MCF 10A (cell line): ENCODE measurements at regions of chr5 and their contacts with region 1.

Region 1: DNA sequence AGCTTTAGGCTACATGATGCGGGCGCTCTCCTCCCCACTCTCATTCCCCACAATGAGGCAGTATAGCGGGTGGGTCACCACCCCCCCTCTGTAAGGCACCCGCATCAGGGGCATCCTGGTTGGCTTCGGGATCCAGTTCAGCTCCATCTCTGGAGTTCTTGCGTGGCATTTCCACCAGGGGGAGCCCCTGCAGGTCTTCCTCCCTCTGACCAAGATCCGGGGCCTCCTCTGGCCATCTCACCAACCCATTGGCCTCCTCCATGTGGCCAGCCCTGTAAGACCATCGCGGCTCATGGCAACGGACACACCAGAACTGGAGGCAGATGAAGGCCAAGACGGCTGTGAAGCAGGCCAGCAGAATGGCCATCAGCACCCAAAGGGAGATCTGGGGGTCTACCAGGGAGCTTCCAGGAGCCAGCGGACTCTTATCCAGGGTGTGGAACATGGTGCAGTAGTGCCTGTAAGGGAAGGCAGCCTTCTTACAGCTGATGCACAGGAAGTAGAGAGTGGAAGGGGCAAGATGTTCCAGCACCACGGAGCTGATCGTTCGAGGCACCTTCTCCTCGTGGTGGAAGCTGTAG is 77.0 kb downstream of the CYFIP2 start:
- DNase-seq: peak; percentile 66
- H3K4me3 Mint-ChIP-seq: no peak overlapping the region
- H3K27ac Mint-ChIP-seq: no peak overlapping the region
- H3K4me1 Mint-ChIP-seq: no peaks in the 10 kb centered on the region
- H3K27me3 Mint-ChIP-seq: no peaks in the 10 kb centered on the region
- CTCF ChIP-seq: peak; percentile 82

Region 2: DNA sequence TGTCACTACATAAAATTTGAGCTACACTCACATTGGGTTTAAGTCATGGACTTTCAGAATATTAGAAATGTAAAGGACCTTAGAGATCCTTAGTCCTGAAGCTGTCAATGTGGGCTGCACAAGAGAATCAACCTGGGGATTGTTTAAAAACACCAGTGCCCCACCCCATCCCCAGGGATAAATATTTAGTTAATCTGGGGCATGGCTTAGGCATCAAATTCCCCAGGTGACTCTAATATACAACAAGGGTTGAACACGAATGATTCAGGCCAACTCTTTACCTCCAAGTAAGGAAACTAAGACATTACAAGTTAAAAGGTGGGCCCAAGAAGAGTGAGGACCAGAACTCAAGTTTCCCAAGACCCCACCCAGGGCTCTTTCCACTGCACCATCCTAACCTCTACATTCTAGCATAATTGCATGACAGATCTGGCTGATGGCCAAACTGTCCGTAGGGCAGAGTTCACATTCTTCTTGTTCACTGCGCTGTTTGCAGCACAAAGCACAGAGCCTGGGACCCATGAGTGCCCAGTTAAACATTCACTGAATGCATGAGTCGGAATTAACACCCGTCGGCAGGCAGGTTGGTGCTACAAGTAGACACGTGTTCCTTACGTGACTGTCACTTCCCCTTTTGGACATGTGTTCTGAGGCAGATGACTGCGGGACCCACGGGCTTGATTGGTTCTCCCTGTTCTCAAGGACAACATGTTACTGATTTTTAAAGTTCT is 51.8 kb before region 1 on chr5:
- CTCF ChIA-PET with region 1: no interaction called
- POLR2A ChIA-PET with region 1: no interaction called
- intact Hi-C with region 1: no loop called
- DNase-seq: peak; percentile 39
- H3K4me3 Mint-ChIP-seq: no peak overlapping the region
- H3K27ac Mint-ChIP-seq: no peak overlapping the region
- H3K4me1 Mint-ChIP-seq: peaks cover 15% of the 10 kb centered on the region
- H3K27me3 Mint-ChIP-seq: no peaks in the 10 kb centered on the region
- CTCF ChIP-seq: no peak

Region 3: DNA sequence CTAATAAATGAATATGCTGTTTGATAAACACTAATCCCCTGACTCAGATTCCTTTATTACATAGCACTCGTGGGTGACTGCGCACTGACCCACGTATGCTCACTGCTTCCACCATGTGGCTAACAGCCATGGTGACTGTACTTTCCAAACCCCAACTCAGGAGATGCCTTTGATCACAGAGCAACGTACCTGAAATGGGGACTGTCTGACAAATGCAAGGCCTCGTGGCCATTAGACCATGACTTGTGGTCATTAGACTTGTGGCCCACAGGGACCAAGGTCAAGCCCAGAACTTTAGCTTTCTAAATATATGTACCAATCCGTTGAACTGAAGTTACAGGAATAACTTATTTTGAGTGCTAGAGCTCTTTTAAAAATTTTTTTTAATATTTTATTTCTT is 30.4 kb before region 1 on chr5:
- CTCF ChIA-PET with region 1: interaction called, 11 read pairs
- POLR2A ChIA-PET with region 1: no interaction called
- intact Hi-C with region 1: no loop called
- DNase-seq: peak; percentile 67
- H3K4me3 Mint-ChIP-seq: no peak overlapping the region
- H3K27ac Mint-ChIP-seq: no peak overlapping the region
- H3K4me1 Mint-ChIP-seq: no peaks in the 10 kb centered on the region
- H3K27me3 Mint-ChIP-seq: no peaks in the 10 kb centered on the region
- CTCF ChIP-seq: peak; percentile 82

Region 4: DNA sequence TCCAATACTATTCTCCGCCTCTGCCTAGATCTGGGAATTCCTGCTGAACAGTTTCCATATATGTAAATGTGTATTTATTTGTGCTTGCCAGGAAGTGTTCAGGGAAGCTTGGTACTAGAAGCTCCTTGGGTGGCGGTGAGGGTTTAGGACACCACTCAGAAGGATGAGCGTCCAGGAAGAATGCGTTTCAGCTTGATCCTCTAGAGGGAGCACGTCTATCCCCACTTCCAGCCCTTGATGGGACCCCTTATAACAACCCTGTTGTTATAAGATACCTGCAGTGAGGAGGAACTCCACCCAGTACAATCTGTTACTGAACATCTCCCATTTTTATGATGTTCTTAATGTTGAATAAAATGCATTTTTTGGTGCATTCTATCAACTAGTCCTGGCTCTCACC is 11.9 kb after region 1 on chr5:
- CTCF ChIA-PET with region 1: interaction called, 54 read pairs
- POLR2A ChIA-PET with region 1: interaction called, 4 read pairs
- intact Hi-C with region 1: no loop called
- DNase-seq: peak; percentile 19
- H3K4me3 Mint-ChIP-seq: no peak overlapping the region
- H3K27ac Mint-ChIP-seq: no peak overlapping the region
- H3K4me1 Mint-ChIP-seq: no peaks in the 10 kb centered on the region
- H3K27me3 Mint-ChIP-seq: no peaks in the 10 kb centered on the region
- CTCF ChIP-seq: peak; percentile 30

Region 5: DNA sequence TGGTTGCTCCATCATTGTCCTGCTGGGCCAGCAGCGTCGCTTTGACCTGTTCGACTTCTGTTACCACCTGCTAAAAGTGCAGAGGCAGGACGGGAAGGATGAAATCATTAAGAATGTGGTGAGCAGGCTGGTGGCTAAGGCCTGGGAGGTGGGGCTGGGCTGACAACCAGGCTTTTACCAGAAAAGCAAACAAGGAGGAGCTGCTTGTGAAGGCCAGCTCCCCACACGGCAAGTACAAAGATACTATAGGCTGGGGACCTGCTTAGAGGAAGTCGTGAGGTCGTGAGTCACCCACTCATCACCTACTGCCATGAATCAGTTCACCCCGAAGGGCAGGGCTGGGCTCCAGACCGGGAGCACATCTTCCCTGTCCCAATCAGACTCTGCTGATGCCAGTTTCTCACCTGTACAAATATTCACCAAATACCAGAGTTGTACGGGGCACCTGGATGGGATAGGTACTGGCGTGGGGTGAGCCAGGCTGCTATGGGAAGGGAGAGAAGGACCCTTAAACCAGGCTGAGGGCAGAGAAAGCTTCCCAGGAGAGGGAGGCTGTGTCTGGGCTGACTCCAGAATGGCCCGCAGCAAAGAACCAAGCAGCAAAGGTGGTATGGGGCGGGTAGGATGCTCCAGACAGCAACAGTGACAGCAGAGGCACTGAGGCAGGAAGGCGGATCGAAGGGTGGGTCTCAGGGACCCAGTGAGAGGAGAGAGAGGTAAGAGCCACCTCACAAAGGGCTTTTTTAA is 47.8 kb after region 1 on chr5:
- CTCF ChIA-PET with region 1: interaction called, 11 read pairs
- POLR2A ChIA-PET with region 1: interaction called, 3 read pairs
- intact Hi-C with region 1: no loop called
- DNase-seq: peak; percentile 98
- H3K4me3 Mint-ChIP-seq: no peak overlapping the region
- H3K27ac Mint-ChIP-seq: peak overlapping the region; percentile 76
- H3K4me1 Mint-ChIP-seq: peaks cover 23% of the 10 kb centered on the region
- H3K27me3 Mint-ChIP-seq: no peaks in the 10 kb centered on the region
- CTCF ChIP-seq: no peak

Region 6: GRCh38 chr5:157471709-157472108 is 128.8 kb after region 1 on chr5:
- CTCF ChIA-PET with region 1: interaction called, 76 read pairs
- POLR2A ChIA-PET with region 1: no interaction called
- intact Hi-C with region 1: no loop called
- DNase-seq: peak; percentile 64
- H3K4me3 Mint-ChIP-seq: no peak overlapping the region
- H3K27ac Mint-ChIP-seq: no peak overlapping the region
- H3K4me1 Mint-ChIP-seq: no peaks in the 10 kb centered on the region
- H3K27me3 Mint-ChIP-seq: no peaks in the 10 kb centered on the region
- CTCF ChIP-seq: peak; percentile 81

Region 7: GRCh38 chr5:157486221-157486681 is 143.3 kb after region 1 on chr5:
- CTCF ChIA-PET with region 1: interaction called, 10 read pairs
- POLR2A ChIA-PET with region 1: no interaction called
- intact Hi-C with region 1: no loop called
- DNase-seq: no peak
- H3K4me3 Mint-ChIP-seq: no peak overlapping the region
- H3K27ac Mint-ChIP-seq: no peak overlapping the region
- H3K4me1 Mint-ChIP-seq: peaks cover 5% of the 10 kb centered on the region
- H3K27me3 Mint-ChIP-seq: no peaks in the 10 kb centered on the region
- CTCF ChIP-seq: no peak